ENCODE measurements at regions of chr15 and their contacts with region 1.

Region 1: DNA sequence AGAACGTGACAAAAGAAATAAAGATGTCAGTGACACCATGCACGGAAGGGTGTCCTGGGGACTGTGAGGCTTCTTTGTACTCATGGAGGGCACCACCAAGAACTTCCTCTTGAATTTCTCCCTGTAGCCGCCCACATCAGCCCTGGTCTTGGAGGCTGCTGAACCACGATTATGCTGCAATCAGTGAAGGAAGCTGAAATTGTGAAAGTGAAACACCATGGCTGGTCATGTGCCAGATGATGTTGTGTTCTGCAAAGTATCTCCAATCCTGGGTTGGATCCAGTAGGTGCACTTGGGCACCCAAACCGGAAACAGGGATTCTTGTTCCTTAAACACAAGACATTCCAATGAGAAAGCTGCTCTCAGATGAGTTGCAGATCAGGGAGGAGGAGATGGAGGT is 104.4 kb upstream of the GOLGA6L6 start:
- DNase-seq: peak; percentile 46 to 59
- ATAC-seq: peak; percentile 52 to 92 (median 90)
- H3K4me3 ChIP-seq: no peak overlapping the region
- H3K4me3 Mint-ChIP-seq: no peak overlapping the region
- H3K27ac ChIP-seq: peak overlapping the region; percentile 4
- H3K27ac Mint-ChIP-seq: no peak overlapping the region
- H3K4me1 ChIP-seq: peaks cover 11% of the 10 kb centered on the region
- H3K4me1 Mint-ChIP-seq: peaks cover 2% of the 10 kb centered on the region in 2 donors
- H3K27me3 ChIP-seq: no peaks in the 10 kb centered on the region
- H3K27me3 Mint-ChIP-seq: no peaks in the 10 kb centered on the region
- CTCF ChIP-seq: no peak

Region 2: GRCh38 chr15:20659265-20659664 is 13.3 kb after region 1 on chr15:
- intact Hi-C with region 1: loop called (anchors 1 kb)
- DNase-seq: no peak
- ATAC-seq: peak; percentile 11 to 52 (median 29)
- H3K4me3 ChIP-seq: no peak overlapping the region
- H3K4me3 Mint-ChIP-seq: no peak overlapping the region
- H3K27ac ChIP-seq: no peak overlapping the region
- H3K27ac Mint-ChIP-seq: no peak overlapping the region
- H3K4me1 ChIP-seq: no peaks in the 10 kb centered on the region
- H3K4me1 Mint-ChIP-seq: no peaks in the 10 kb centered on the region
- H3K27me3 ChIP-seq: peaks cover 5% of the 10 kb centered on the region
- H3K27me3 Mint-ChIP-seq: no peaks in the 10 kb centered on the region
- CTCF ChIP-seq: no peak

Region 3: GRCh38 chr15:20672469-20672868 is 26.5 kb after region 1 on chr15:
- intact Hi-C with region 1: no loop called
- DNase-seq: no peak
- ATAC-seq: peak in 1 of 3 donors; percentile 27
- H3K4me3 ChIP-seq: no peak overlapping the region
- H3K4me3 Mint-ChIP-seq: no peak overlapping the region
- H3K27ac ChIP-seq: no peak overlapping the region
- H3K27ac Mint-ChIP-seq: no peak overlapping the region
- H3K4me1 ChIP-seq: no peaks in the 10 kb centered on the region
- H3K4me1 Mint-ChIP-seq: no peaks in the 10 kb centered on the region
- H3K27me3 ChIP-seq: peaks cover 4% of the 10 kb centered on the region
- H3K27me3 Mint-ChIP-seq: peaks cover 3 to 8% of the 10 kb centered on the region in 2 donors
- CTCF ChIP-seq: no peak

Measured in natural killer cell (primary cell).